Activated CD4-positive, alpha-beta memory T cell treated with anti-CD3 and anti-CD28 coated beads, Interleukin-2, amount 10 ng/mL, durations not matched to agents 7 days and 5 days (primary cell): ENCODE measurements at regions of chr7 and their contacts with region 1.

Region 1: GRCh38 chr7:74206589-74207120 is 3.2 kb upstream of the LAT2 start:
- DNase-seq: peak; percentile 82
- H3K4me3 Mint-ChIP-seq: peak overlapping the region; percentile 35
- H3K27ac Mint-ChIP-seq: no peak overlapping the region
- H3K4me1 Mint-ChIP-seq: peaks cover 36% of the 10 kb centered on the region
- H3K27me3 Mint-ChIP-seq: no peaks in the 10 kb centered on the region

Region 2: GRCh38 chr7:74012842-74013249 is 193.8 kb before region 1 on chr7:
- CTCF ChIA-PET with region 1: no interaction called
- POLR2A ChIA-PET with region 1: no interaction called
- DNase-seq: no peak
- H3K4me3 Mint-ChIP-seq: no peak overlapping the region
- H3K27ac Mint-ChIP-seq: no peak overlapping the region
- H3K4me1 Mint-ChIP-seq: peaks cover 2% of the 10 kb centered on the region
- H3K27me3 Mint-ChIP-seq: peaks cover 5% of the 10 kb centered on the region

Region 3: GRCh38 chr7:74051629-74052410 is 154.8 kb before region 1 on chr7:
- CTCF ChIA-PET with region 1: no interaction called
- POLR2A ChIA-PET with region 1: no interaction called
- DNase-seq: no peak
- H3K4me3 Mint-ChIP-seq: no peak overlapping the region
- H3K27ac Mint-ChIP-seq: no peak overlapping the region
- H3K4me1 Mint-ChIP-seq: no peaks in the 10 kb centered on the region
- H3K27me3 Mint-ChIP-seq: no peaks in the 10 kb centered on the region

Region 4: DNA sequence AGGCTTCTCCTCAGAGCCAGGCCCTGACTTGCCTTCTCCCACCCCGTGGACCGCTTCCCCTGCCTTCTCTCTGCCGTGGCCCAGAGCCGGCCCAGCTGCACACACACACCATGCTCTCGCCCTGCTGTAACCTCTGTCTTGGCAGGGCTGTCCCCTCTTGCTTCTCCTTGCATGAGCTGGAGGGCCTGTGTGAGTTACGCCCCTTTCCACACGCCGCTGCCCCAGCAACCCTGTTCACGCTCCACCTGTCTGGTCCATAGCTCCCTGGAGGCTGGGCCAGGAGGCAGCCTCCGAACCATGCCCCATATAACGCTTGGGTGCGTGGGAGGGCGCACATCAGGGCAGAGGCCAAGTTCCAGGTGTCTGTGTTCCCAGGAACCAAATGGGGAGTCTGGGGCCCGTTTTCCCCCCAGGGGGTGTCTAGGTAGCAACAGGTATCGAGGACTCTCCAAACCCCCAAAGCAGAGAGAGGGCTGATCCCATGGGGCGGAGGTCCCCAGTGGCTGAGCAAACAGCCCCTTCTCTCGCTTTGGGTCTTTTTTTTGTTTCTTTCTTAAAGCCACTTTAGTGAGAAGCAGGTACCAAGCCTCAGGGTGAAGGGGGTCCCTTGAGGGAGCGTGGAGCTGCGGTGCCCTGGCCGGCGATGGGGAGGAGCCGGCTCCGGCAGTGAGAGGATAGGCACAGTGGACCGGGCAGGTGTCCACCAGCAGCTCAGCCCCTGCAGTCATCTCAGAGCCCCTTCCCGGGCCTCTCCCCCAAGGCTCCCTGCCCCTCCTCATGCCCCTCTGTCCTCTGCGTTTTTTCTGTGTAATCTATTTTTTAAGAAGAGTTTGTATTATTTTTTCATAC is 85.0 kb before region 1 on chr7:
- CTCF ChIA-PET with region 1: no interaction called
- POLR2A ChIA-PET with region 1: no interaction called
- DNase-seq: no peak
- H3K4me3 Mint-ChIP-seq: no peak overlapping the region
- H3K27ac Mint-ChIP-seq: no peak overlapping the region
- H3K4me1 Mint-ChIP-seq: no peaks in the 10 kb centered on the region
- H3K27me3 Mint-ChIP-seq: no peaks in the 10 kb centered on the region

Region 5: DNA sequence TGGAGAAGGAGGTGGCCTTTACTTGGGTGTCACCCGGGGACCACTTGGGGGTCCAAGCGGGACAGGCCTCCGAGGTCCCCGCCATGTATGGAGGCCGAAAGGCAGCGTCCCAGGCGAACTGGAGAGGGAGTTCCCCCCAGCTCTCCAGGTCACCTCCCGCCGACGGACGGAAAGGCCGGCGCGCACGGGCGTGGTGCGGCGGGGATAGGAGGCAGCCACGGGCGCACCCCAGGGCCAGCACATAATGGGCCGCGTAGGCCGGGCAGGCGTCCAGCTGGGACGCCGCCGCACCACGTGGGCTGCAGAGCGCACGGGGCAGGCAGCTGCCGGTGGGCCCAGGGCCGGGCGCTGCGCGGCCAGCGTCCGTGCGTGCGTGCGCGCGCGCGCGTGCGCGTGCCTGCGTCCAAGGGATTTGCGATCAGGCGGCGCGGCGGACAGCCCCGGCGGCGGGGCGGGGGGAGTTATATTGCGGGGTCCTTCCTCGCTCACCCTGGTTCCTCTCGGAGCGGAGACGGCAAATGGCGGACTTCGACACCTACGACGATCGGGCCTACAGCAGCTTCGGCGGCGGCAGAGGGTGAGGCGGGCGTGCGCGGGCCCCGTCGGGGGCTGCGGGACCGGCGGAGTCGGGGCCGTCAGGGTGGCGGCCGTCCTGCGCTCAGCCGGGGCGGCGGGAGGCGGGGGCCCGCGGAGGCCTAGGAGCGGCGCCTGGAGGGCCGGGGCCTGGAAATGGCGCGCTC is 32.6 kb before region 1 on chr7 and contains the start of gene EIF4H:
- CTCF ChIA-PET with region 1: interaction called, 15 read pairs
- POLR2A ChIA-PET with region 1: interaction called, 8 read pairs
- DNase-seq: peak; percentile 95
- H3K4me3 Mint-ChIP-seq: peak within 1 kb of the TSS; percentile 95
- H3K27ac Mint-ChIP-seq: peak within 1 kb of the TSS; percentile 87
- H3K4me1 Mint-ChIP-seq: peaks cover 49% of the 10 kb centered on the region
- H3K27me3 Mint-ChIP-seq: no peaks in the 10 kb centered on the region
- total RNA-seq, gene EIF4H: 295 to 320 TPM

Region 6: DNA sequence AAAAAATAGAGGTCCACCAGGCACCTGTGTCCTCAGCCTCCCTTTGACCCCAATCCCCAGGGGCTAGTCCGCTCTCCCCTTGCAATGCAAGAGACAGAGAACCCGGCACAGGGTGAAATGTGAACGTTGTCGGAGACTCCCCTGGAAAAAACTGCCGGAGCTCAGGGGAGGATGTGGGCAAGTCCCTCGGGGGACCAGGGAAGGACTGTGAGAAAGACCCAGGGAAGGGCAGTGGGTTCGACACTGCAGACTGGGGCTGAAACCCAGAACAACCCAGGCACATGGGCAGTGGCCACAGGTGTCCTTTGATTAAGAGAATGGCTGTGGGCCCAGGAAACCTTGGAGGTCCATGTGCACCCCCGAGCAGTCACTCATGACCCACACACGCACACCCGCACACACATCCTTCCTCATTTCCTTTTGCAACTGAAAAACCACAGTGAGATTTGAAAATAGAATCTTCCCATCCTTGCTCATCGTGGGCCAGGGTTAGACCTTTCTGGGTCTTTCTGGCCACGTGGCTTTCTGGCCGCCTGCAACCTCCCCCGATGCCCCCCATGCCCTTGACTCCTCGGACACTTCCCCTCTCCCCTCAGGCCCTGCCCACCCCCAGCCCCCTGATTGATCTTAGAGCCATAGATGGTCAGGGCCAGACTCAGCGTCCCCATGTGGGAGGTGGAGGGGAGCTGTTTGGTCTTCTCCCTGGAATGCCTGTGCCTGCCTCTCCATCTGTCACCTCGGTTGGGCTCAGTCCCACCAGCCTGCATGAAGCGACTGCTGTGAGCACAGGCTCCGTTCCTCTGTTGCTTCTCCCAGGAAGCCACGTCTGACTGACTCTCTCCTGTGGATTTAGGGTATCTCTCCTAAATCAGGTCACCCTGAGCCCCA is 11.0 kb after region 1 on chr7:
- CTCF ChIA-PET with region 1: interaction called, 27 read pairs
- POLR2A ChIA-PET with region 1: interaction called, 3 read pairs
- DNase-seq: peak; percentile 46
- H3K4me3 Mint-ChIP-seq: peak overlapping the region; percentile 30
- H3K27ac Mint-ChIP-seq: peak overlapping the region; percentile 74
- H3K4me1 Mint-ChIP-seq: peaks cover 34% of the 10 kb centered on the region
- H3K27me3 Mint-ChIP-seq: no peaks in the 10 kb centered on the region

Region 7: GRCh38 chr7:74254129-74254857 is 47.6 kb after region 1 on chr7 and contains the start of gene RFC2:
- CTCF ChIA-PET with region 1: interaction called, 12 read pairs
- POLR2A ChIA-PET with region 1: interaction called, 9 read pairs
- DNase-seq: peak; percentile 98
- H3K4me3 Mint-ChIP-seq: peak within 1 kb of the TSS; percentile 92
- H3K27ac Mint-ChIP-seq: peak within 1 kb of the TSS; percentile 92
- H3K4me1 Mint-ChIP-seq: peaks cover 46% of the 10 kb centered on the region
- H3K27me3 Mint-ChIP-seq: peaks cover 3% of the 10 kb centered on the region
- total RNA-seq, gene RFC2: 52.5 to 55.9 TPM

Region 8: GRCh38 chr7:74401137-74401859 is 194.6 kb after region 1 on chr7:
- CTCF ChIA-PET with region 1: interaction called, 170 read pairs
- POLR2A ChIA-PET with region 1: interaction called, 14 read pairs
- DNase-seq: peak; percentile 75
- H3K4me3 Mint-ChIP-seq: no peak overlapping the region
- H3K27ac Mint-ChIP-seq: no peak overlapping the region
- H3K4me1 Mint-ChIP-seq: no peaks in the 10 kb centered on the region
- H3K27me3 Mint-ChIP-seq: no peaks in the 10 kb centered on the region

Region 9: GRCh38 chr7:74429153-74429747 is 222.6 kb after region 1 on chr7:
- CTCF ChIA-PET with region 1: no interaction called
- POLR2A ChIA-PET with region 1: no interaction called
- DNase-seq: no peak
- H3K4me3 Mint-ChIP-seq: no peak overlapping the region
- H3K27ac Mint-ChIP-seq: no peak overlapping the region
- H3K4me1 Mint-ChIP-seq: no peaks in the 10 kb centered on the region
- H3K27me3 Mint-ChIP-seq: no peaks in the 10 kb centered on the region